A549 (cell line): ENCODE measurements at regions of chr5 and their contacts with region 1.

Region 1: DNA sequence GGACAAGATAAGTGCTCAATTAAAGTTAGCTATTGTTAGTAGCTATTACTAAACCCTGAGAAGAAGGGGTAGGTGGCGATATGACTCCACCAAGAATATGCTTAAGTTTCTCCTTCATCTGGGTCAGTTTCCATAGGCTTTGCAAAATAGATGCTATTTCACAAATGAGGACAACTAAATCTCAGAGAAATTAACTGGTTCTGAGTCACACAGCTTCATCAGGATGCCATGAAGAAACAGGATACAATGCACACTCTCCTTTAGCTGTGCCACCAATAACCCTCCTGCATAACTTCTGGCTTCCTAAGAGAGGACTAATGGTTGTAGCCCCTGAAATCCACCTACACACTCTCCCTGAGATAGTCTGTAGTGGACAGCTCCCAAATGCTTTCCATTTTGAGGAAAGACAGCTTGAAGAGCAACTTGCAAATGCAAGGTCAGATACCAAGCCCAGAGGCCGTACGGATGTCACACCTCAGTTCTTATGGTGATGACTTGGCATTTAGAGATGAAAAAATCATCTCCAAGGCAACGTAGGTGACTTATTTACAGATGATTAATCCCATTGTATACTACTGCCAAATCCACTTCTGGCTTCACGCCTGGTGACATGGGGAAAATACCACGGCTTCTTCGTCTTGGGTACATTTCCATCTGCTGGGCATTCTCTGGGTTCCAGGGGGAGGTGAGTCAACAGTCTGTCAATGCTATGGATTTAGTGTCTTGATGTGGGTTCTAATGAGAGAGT is 251.4 kb upstream of the IL12B start:
- DNase-seq: peak; percentile 77 to 97
- ATAC-seq: peak; percentile 86 to 88
- H3K4me3 ChIP-seq: no peak overlapping the region
- H3K27ac ChIP-seq: peak overlapping the region; percentile 74 to 87
- H3K4me1 ChIP-seq: peaks cover 66% of the 10 kb centered on the region
- CTCF ChIP-seq: peak; percentile 52
- EP300 ChIP-seq: peak; percentile 77 to 84; a peak in 3 of 5 replicates
- POLR2A ChIP-seq: no peak
- RAD21 ChIP-seq: peak; percentile 58 to 67

Region 2: GRCh38 chr5:159451197-159452052 is 130.3 kb before region 1 on chr5:
- CTCF ChIA-PET with region 1: interaction called, 13 read pairs
- POLR2A ChIA-PET with region 1: no interaction called
- DNase-seq: peak; percentile 73 to 75
- ATAC-seq: peak; percentile 78 to 87
- H3K4me3 ChIP-seq: no peak overlapping the region
- H3K27ac ChIP-seq: peak overlapping the region; percentile 57 to 78
- H3K4me1 ChIP-seq: peaks cover 47% of the 10 kb centered on the region
- CTCF ChIP-seq: no peak
- EP300 ChIP-seq: no peak
- POLR2A ChIP-seq: no peak
- RAD21 ChIP-seq: peak; percentile 7 to 34; a peak in 4 of 5 replicates

Region 3: DNA sequence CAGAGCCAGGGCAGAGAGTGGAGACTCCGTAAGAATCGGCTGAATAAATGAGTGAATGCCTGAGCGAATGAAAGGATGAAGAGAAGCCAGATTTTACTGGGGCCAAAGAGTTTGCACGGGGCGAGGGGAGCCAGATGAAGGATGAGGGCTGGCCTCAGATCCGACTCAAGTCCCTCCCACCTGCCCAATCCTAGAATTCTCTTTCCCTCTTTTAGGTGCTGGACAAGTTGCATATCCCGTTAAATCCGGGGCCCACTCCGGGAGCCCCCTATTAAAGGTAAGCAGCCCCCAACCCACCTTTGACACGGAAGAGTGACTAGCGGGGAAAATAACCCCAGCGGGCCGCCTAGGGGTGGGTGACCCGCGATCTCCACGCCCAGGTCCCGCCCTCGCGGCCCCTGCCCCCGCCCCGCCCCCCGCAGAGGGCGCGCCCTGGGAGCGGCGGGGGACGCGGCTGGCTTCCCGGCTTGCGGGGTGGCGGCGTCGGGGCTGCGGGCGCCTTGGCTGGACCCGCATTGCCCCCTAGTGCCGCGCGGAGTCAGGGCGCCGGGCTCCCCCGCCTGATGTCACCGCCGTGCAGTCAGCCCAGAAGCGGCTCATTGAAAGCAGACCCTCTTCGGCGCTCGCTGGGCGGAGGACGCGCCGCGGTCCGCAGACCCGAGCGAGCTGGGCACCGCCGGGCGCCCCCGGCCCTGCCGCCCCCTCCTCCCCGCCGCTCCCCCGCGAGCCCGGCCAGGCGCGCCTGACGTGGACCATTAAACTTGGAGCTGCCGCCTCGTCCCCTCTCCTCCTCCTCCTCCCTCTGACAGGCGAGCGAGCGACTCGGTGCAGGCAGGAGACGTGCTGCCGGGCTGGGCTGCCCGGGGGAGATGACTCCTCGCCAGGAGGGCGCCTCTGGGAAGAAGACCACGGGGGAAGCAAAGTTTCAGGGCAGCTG is 334.5 kb after region 1 on chr5 and contains the start of gene ADRA1B:
- CTCF ChIA-PET with region 1: interaction called, 25 read pairs
- POLR2A ChIA-PET with region 1: interaction called, 4 read pairs
- DNase-seq: peak; percentile 76 to 86
- ATAC-seq: peak; percentile 70 to 73
- H3K4me3 ChIP-seq: peak within 1 kb of the TSS; percentile 63
- H3K27ac ChIP-seq: peak within 1 kb of the TSS; percentile 89 to 96
- H3K4me1 ChIP-seq: peaks cover 84% of the 10 kb centered on the region
- CTCF ChIP-seq: peak; percentile 84
- EP300 ChIP-seq: peak; percentile 18 to 21; a peak in 1 of 5 replicates
- POLR2A ChIP-seq: no peak
- RAD21 ChIP-seq: peak; percentile 79 to 99
- polyA plus RNA-seq, gene ADRA1B: 4.4 and 5.1 TPM in 2 replicates